ENCODE measurements at regions of chr7 and their contacts with region 1.

Region 1: GRCh38 chr7:121107923-121108498 is 119.5 kb downstream of the CPED1 start:
- DNase-seq: no peak
- H3K4me3 ChIP-seq: no peak overlapping the region
- H3K27ac ChIP-seq: no peak overlapping the region
- H3K4me1 ChIP-seq: peaks cover 32% of the 10 kb centered on the region
- H3K27me3 ChIP-seq: no peaks in the 10 kb centered on the region
- CTCF ChIP-seq: peak; percentile 87

Region 2: DNA sequence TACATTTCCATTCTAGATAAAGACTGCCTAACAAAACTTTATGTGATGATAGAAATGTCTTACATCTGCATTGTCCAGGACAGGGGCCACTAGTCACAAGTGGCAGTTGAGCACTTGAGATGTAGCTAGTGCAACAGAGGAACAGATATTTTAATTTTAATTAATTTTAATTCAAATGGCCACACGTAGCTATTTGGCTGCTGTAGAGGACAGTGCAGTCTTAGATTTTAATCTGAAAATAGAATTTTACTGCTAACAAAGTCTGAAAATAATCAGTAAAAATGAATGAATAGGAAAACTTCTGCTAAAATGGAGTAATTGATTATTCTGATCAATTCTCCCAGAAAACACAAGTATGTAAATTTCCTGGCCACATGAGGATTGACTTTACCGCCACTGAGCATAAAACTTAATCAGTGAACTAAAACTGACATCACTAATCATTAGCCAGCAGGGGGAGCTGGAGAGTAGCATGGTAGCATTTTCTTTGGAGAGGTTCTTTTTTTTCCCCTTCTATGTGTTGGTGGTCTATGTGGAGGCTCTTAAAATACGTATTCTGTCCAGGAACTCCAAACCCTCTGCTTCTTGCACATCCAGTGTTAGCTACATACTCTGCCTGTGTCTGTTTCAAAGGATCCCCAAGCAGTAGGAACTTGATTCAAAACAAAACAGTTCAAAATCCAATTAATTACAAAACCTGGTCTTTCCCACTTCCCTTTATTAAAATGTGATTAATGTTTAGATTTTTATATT is 302.2 kb before region 1 on chr7:
- intact Hi-C with region 1: loop called (anchors 10 kb)
- DNase-seq: no peak
- H3K4me3 ChIP-seq: no peak overlapping the region
- H3K27ac ChIP-seq: no peak overlapping the region
- H3K4me1 ChIP-seq: peaks cover 50% of the 10 kb centered on the region
- H3K27me3 ChIP-seq: no peaks in the 10 kb centered on the region
- CTCF ChIP-seq: peak; percentile 89

Region 3: GRCh38 chr7:120933475-120933874 is 174.5 kb before region 1 on chr7:
- intact Hi-C with region 1: no loop called
- DNase-seq: no peak
- H3K4me3 ChIP-seq: no peak overlapping the region
- H3K27ac ChIP-seq: no peak overlapping the region
- H3K4me1 ChIP-seq: no peaks in the 10 kb centered on the region
- H3K27me3 ChIP-seq: no peaks in the 10 kb centered on the region
- CTCF ChIP-seq: no peak

Region 4: DNA sequence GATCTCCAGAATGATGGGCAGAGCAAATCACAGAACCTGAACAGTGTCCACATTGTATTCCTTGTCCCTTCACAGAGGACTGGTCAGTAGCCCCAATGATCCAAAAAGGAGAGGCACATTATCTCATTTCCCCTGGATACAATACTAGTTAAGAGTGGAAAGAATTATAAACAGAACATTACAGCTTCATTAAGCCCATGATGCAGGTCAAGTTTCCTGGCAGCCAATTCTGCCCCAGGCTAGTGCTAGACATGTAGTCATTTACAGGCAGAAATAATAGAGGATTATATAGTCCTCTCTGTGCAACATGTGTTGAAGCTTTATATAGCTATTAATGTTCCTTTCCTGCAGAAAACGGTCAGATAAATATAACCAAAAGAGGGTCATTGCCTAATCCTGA is 96.5 kb after region 1 on chr7:
- intact Hi-C with region 1: no loop called
- DNase-seq: peak; percentile 14
- H3K4me3 ChIP-seq: no peak overlapping the region
- H3K27ac ChIP-seq: peak overlapping the region; percentile 18
- H3K4me1 ChIP-seq: peaks cover 12% of the 10 kb centered on the region
- H3K27me3 ChIP-seq: no peaks in the 10 kb centered on the region
- CTCF ChIP-seq: no peak